Heart left ventricle (tissue), 16 donors: ENCODE measurements at regions of chr1 and their contacts with region 1.

Region 1: GRCh38 chr1:28648474-28649198 is at the start of gene RNU11:
- DNase-seq: peak; percentile 86 to 89 (median 87)
- ATAC-seq: peak; percentile 82 to 87 (median 86)
- H3K4me3 ChIP-seq: peak within 1 kb of the TSS in 11 of 12 donors; percentile 9 to 58 (median 49)
- H3K27ac ChIP-seq: peak within 1 kb of the TSS; percentile 87 to 100 (median 92)
- H3K4me1 ChIP-seq: peaks cover 0 to 33% (median 18%) of the 10 kb centered on the region in 12 donors
- H3K27me3 ChIP-seq: no peaks in the 10 kb centered on the region
- CTCF ChIP-seq: peak in 1 of 12 donors; percentile 14
- POLR2A ChIP-seq: peak; percentile 68 to 92
- total RNA-seq, gene RNU11: not detected

Region 2: GRCh38 chr1:28526889-28527288 is 121.7 kb before region 1 on chr1:
- intact Hi-C with region 1: no loop called
- DNase-seq: no peak
- ATAC-seq: no peak
- H3K4me3 ChIP-seq: no peak overlapping the region
- H3K27ac ChIP-seq: no peak overlapping the region
- H3K4me1 ChIP-seq: no peaks in the 10 kb centered on the region
- H3K27me3 ChIP-seq: no peaks in the 10 kb centered on the region
- CTCF ChIP-seq: no peak
- POLR2A ChIP-seq: no peak

Region 3: DNA sequence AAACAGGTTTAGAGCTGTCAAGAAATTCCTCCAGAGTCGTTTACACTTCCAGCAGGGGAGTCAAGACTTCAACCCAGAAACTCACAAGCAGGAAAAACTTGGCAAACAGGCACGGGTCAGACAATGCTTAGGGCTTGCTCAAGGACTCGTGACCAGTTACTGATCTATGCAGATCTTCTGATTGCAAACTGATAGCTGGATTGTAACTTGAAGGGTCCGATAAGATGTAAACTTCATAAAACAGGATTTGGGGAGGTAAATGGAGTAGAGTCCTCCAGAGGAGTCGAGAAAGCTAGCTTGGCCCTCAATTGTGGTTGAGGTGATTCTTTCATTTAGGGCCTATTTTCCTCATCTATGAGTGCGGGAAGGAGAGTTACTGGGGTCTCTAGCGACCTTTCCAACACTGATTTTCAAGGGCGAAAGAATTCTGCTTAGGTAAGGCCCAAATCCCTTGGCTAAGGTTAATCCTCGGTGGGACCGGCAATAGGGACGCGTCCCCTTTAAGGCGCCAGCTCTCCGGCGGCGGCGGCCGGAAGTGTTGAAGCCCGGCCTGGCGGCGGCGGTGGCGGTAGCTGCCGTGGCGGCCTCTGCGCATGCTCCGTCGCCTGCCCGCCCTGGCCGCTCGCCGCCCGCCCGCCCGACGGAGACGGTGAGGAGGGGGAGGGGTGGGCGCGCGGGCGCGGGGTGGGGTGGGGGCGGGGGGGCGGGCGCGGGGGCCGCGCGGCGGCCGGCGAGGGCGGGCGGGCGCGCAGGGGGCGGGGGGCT is 19.7 kb after region 1 on chr1 and contains the start of gene GMEB1:
- intact Hi-C with region 1: loop called in 7 of 10 experiments (anchors 1 to 2 kb)
- DNase-seq: peak; percentile 88 to 94 (median 89)
- ATAC-seq: peak; percentile 79 to 93 (median 92)
- H3K4me3 ChIP-seq: peak within 1 kb of the TSS; percentile 96 to 100 (median 99)
- H3K27ac ChIP-seq: peak within 1 kb of the TSS; percentile 98 to 100 (median 99)
- H3K4me1 ChIP-seq: peaks cover 0 to 23% (median 18%) of the 10 kb centered on the region in 12 donors
- H3K27me3 ChIP-seq: no peaks in the 10 kb centered on the region
- CTCF ChIP-seq: peak in 2 of 12 donors; percentile 9 to 10
- POLR2A ChIP-seq: no peak
- total RNA-seq, gene GMEB1: 4.3 to 8.5 (median 6.1) TPM

Region 4: GRCh38 chr1:29703596-29704370 is 1055.1 kb after region 1 on chr1:
- intact Hi-C with region 1: no loop called
- DNase-seq: no peak
- ATAC-seq: peak in 2 of 4 donors; percentile 30 to 34
- H3K4me3 ChIP-seq: no peak overlapping the region
- H3K27ac ChIP-seq: no peak overlapping the region
- H3K4me1 ChIP-seq: peaks cover 0 to 9% (median 0%) of the 10 kb centered on the region in 12 donors
- H3K27me3 ChIP-seq: peaks cover 0 to 32% (median 25%) of the 10 kb centered on the region in 9 donors
- CTCF ChIP-seq: peak; percentile 34 to 65 (median 54)
- POLR2A ChIP-seq: no peak